ENCODE measurements at regions of chr15 and their contacts with region 1.

Region 1: GRCh38 chr15:68210821-68211655 is 5.9 kb upstream of the CALML4 start:
- DNase-seq: peak; percentile 87
- ATAC-seq: peak; percentile 71
- H3K4me3 Mint-ChIP-seq: no peak overlapping the region
- H3K27ac Mint-ChIP-seq: no peak overlapping the region
- H3K4me1 Mint-ChIP-seq: peaks cover 16% of the 10 kb centered on the region
- H3K27me3 Mint-ChIP-seq: no peaks in the 10 kb centered on the region
- CTCF ChIP-seq: peak; percentile 75

Region 2: GRCh38 chr15:68192804-68193486 is 18.1 kb before region 1 on chr15:
- CTCF ChIA-PET with region 1: interaction called, 38 read pairs
- POLR2A ChIA-PET with region 1: interaction called, 5 read pairs
- DNase-seq: no peak
- ATAC-seq: no peak
- H3K4me3 Mint-ChIP-seq: no peak overlapping the region
- H3K27ac Mint-ChIP-seq: peak overlapping the region; percentile 84
- H3K4me1 Mint-ChIP-seq: peaks cover 17% of the 10 kb centered on the region
- H3K27me3 Mint-ChIP-seq: no peaks in the 10 kb centered on the region
- CTCF ChIP-seq: no peak

Region 3: GRCh38 chr15:68229386-68230156 is 18.5 kb after region 1 on chr15 and contains the start of gene CLN6:
- CTCF ChIA-PET with region 1: interaction called, 33 read pairs
- POLR2A ChIA-PET with region 1: interaction called, 4 read pairs
- DNase-seq: peak; percentile 84
- ATAC-seq: peak; percentile 90
- H3K4me3 Mint-ChIP-seq: peak within 1 kb of the TSS; percentile 93
- H3K27ac Mint-ChIP-seq: peak within 1 kb of the TSS; percentile 85
- H3K4me1 Mint-ChIP-seq: peaks cover 31% of the 10 kb centered on the region
- H3K27me3 Mint-ChIP-seq: peaks cover 14% of the 10 kb centered on the region
- CTCF ChIP-seq: no peak
- total RNA-seq, gene CLN6: 50.2 to 52.2 TPM (median 50.8 TPM) in 3 replicates

Region 4: GRCh38 chr15:68614286-68615035 is 403.4 kb after region 1 on chr15:
- CTCF ChIA-PET with region 1: no interaction called
- POLR2A ChIA-PET with region 1: no interaction called
- DNase-seq: peak; percentile 70
- ATAC-seq: peak; percentile 94
- H3K4me3 Mint-ChIP-seq: no peak overlapping the region
- H3K27ac Mint-ChIP-seq: peak overlapping the region; percentile 14
- H3K4me1 Mint-ChIP-seq: peaks cover 44% of the 10 kb centered on the region
- H3K27me3 Mint-ChIP-seq: peaks cover 3% of the 10 kb centered on the region; the same call in 1 of the 2 replicates
- CTCF ChIP-seq: no peak